ENCODE measurements at regions of chr20 and their contacts with region 1.

Region 1: DNA sequence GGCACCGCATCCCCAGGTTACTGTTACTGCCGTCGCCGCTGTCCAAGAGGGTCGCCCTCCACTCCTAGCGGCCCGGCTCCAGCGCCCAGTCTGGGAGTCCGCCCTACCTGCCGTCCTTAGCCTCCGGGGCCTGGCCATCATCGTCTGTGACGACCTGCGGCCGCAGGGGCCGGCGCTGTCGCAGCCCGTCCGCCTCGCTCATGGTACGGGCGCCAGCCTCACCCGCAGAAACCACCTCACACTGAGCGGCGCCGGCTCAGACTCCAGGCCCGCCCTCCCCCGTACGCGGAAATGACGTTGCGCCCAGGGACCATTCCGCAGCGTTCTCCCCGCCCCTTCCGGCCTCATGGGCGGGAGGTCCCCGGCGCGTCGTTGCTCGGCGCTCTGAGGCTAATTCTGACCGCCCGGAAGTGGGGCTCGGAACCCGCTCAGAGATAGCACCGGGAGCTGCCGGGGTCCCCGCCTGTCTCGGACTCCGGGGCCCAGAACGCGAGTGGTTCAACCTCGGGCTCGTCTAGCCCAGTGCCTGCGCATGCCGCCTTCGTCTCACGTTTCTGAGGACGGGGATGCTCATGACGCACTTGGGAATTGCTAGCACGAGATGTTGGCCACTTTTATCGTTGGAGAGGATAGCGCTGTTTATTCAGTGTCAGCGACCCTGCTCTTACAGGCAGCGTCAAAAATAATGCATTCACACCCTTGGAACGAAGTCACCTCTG is at the start of gene APMAP:
- DNase-seq: peak; percentile 88 to 97 (median 94)
- ATAC-seq: peak; percentile 96
- H3K4me3 ChIP-seq: peak within 1 kb of the TSS; percentile 90
- H3K4me3 Mint-ChIP-seq: peak within 1 kb of the TSS; percentile 88 to 96 (median 94)
- H3K27ac ChIP-seq: peak within 1 kb of the TSS; percentile 97
- H3K27ac Mint-ChIP-seq: peak within 1 kb of the TSS; percentile 93 to 98 (median 97)
- H3K4me1 ChIP-seq: peaks cover 27 to 36% of the 10 kb centered on the region in 2 donors
- H3K4me1 Mint-ChIP-seq: peaks cover 39 to 71% (median 57%) of the 10 kb centered on the region in 7 donors
- H3K27me3 ChIP-seq: no peaks in the 10 kb centered on the region
- H3K27me3 Mint-ChIP-seq: peaks cover 0 to 16% (median 0%) of the 10 kb centered on the region in 5 donors
- total RNA-seq, gene APMAP: 28.2 to 47.3 (median 38.8) TPM

Region 2: DNA sequence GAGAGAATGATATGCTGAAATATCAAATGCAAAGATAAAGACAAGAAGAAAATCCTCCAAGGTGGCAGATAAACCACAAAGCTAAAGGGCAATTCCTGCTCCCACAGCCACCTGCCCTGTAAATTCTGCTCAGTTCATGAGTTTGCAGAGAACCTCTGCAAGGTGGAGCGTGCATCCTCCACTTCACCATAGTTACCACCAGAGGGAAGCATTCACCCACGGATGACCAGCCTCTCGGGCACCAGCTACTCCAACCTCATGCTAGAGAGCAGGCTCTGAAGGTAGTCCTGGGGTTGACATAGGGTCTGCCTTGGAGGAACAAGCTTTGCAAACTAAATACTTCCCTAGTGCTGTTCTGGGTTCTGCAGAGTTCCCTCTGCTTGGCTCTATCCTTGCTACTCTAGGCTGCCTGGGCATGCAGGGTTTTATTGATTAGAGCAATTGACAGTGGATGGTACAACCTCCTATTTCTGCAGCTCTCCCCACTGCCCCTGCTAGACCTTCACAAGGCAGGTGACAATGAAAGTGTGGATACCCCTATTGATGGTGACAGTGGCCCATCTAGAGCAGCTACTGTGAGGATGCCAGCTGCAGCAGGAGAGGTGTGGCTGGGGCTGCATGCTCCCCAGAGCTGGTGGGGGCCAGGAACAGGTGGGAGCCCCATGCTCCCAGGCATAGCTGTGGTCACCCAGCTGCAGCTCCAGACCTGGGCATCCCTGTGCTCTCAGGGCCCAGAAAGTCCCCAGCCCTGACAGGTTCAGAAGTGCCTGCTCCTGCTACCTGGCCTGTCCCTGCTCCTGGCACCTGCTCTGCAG is 1055.1 kb before region 1 on chr20:
- CTCF ChIA-PET with region 1: no interaction called
- POLR2A ChIA-PET with region 1: no interaction called
- intact Hi-C with region 1: loop called (anchors 1 to 10 kb)
- DNase-seq: peak; percentile 43 to 80 (median 70)
- ATAC-seq: peak; percentile 97
- H3K4me3 ChIP-seq: no peak overlapping the region
- H3K4me3 Mint-ChIP-seq: no peak overlapping the region
- H3K27ac ChIP-seq: no peak overlapping the region
- H3K27ac Mint-ChIP-seq: peak overlapping the region in 2 of 9 donors; percentile 25 to 79
- H3K4me1 ChIP-seq: no peaks in the 10 kb centered on the region
- H3K4me1 Mint-ChIP-seq: no peaks in the 10 kb centered on the region
- H3K27me3 ChIP-seq: no peaks in the 10 kb centered on the region
- H3K27me3 Mint-ChIP-seq: peaks cover 0 to 7% (median 0%) of the 10 kb centered on the region in 5 donors

Region 3: GRCh38 chr20:24948939-24949679 is 43.5 kb before region 1 on chr20 and contains the start of gene CST7:
- CTCF ChIA-PET with region 1: no interaction called
- POLR2A ChIA-PET with region 1: interaction called, 4 read pairs
- intact Hi-C with region 1: loop called (anchors 1 kb)
- DNase-seq: peak; percentile 33 to 85 (median 77)
- ATAC-seq: peak; percentile 90
- H3K4me3 ChIP-seq: peak within 1 kb of the TSS; percentile 66
- H3K4me3 Mint-ChIP-seq: peak within 1 kb of the TSS in 9 of 10 donors; percentile 27 to 94 (median 54)
- H3K27ac ChIP-seq: no peak within 1 kb of the TSS
- H3K27ac Mint-ChIP-seq: peak within 1 kb of the TSS; percentile 21 to 94 (median 80)
- H3K4me1 ChIP-seq: peaks cover 6 to 33% of the 10 kb centered on the region in 2 donors
- H3K4me1 Mint-ChIP-seq: peaks cover 12 to 75% (median 25%) of the 10 kb centered on the region in 7 donors
- H3K27me3 ChIP-seq: no peaks in the 10 kb centered on the region
- H3K27me3 Mint-ChIP-seq: no peaks in the 10 kb centered on the region
- total RNA-seq, gene CST7: 1.4 to 74.9 (median 11.5) TPM

Region 4: GRCh38 chr20:25178563-25179438 is 186.2 kb after region 1 on chr20:
- CTCF ChIA-PET with region 1: interaction called, 12 read pairs
- POLR2A ChIA-PET with region 1: interaction called, 4 read pairs
- intact Hi-C with region 1: loop called (anchors 1 kb)
- DNase-seq: peak in 6 of 9 donors; percentile 21 to 52 (median 46)
- ATAC-seq: peak; percentile 82
- H3K4me3 ChIP-seq: no peak overlapping the region
- H3K4me3 Mint-ChIP-seq: no peak overlapping the region
- H3K27ac ChIP-seq: no peak overlapping the region
- H3K27ac Mint-ChIP-seq: peak overlapping the region in 1 of 9 donors; percentile 38
- H3K4me1 ChIP-seq: no peaks in the 10 kb centered on the region
- H3K4me1 Mint-ChIP-seq: no peaks in the 10 kb centered on the region
- H3K27me3 ChIP-seq: no peaks in the 10 kb centered on the region
- H3K27me3 Mint-ChIP-seq: peaks cover 4 to 27% (median 7%) of the 10 kb centered on the region in 5 donors

Region 5: DNA sequence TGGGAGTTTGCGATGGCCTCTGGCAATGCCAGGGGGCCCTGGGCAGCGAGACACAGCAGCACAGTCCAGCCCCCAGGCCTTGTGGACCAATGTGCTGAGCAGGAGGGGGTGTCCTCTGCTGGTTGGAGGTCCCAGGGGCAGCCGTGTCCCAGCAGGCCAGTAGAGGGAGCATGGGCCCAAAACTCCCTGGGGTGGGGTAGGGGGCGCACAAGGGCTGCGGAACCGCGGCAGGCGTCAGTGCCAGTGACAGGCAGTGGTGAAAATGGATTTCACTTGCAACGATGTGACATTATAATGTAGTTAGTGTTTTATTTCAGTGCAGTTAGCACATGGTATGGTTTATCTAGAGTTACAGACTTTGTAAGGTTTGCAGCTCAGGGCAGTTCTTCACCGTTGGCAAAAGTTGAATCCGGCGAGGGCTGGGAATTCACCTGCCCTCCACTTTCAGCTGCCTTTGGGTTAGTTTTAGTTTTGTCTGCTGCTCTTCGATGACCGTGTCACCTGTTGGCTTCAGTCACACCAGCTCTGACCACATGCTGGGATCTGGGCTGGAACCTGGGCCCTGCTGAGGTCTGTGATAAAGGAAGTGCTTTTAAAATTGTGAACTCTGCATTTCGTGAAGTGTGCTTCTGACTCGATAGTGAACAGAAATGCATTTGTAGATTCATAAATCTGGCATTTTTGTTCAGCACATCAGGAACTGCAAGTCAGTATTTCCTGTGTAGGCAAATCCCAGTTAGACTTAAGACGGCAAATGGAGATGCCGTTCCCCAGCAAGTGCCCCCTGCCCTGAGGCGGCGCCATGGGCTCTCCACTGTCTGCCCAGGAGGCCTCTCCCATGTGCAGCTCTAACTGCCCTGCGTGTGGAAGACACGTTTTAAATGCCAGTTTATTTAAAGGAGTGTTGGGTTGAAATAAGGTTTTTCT is 302.1 kb after region 1 on chr20:
- CTCF ChIA-PET with region 1: no interaction called
- POLR2A ChIA-PET with region 1: no interaction called
- intact Hi-C with region 1: loop called (anchors 1 to 2 kb)
- DNase-seq: peak; percentile 43 to 74 (median 59)
- ATAC-seq: peak; percentile 90
- H3K4me3 ChIP-seq: no peak overlapping the region
- H3K4me3 Mint-ChIP-seq: no peak overlapping the region
- H3K27ac ChIP-seq: no peak overlapping the region
- H3K27ac Mint-ChIP-seq: peak overlapping the region in 5 of 9 donors; percentile 29 to 78 (median 57)
- H3K4me1 ChIP-seq: no peaks in the 10 kb centered on the region
- H3K4me1 Mint-ChIP-seq: peaks cover 0 to 12% (median 3%) of the 10 kb centered on the region in 7 donors
- H3K27me3 ChIP-seq: no peaks in the 10 kb centered on the region
- H3K27me3 Mint-ChIP-seq: no peaks in the 10 kb centered on the region

Region 6: DNA sequence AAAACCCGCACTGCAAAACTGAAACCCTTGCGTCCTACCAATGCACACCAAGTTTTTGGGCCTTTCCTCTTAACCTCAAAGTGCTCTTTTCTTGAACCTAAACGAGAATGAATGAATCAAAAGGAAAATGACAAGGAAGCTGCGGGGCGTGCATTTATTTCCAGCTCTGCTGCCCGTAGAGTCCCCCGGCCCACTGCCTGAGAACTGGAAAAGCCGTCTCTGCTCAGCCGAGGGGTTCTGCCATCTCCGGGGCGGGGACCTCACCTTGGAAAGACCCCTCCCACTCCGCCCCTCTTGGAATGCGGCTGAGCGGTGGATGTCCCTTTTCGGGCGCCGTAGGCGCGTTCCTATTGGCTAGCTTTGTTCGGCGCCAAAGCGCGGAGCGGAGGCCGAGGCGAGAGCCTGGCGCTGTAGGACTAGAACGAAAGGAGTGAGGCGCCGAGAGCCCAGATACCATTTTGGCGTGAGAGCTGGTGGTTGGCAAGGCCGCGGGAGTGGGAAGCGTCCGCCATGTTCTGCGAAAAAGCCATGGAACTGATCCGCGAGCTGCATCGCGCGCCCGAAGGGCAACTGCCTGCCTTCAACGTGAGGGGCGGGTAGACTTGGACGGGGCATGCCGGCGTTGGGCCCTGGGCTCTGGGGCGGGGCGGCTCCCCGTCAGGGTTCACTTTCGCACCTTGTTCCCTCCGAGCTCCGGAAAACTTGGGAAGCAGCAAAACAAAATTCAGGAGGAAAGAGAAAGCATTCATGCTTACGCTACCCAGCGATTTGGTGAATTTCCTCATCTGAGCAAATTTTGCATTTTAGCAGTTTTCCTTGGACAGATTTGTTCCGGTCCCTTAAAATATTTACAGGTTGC is 414.9 kb after region 1 on chr20 and contains the start of gene GINS1:
- CTCF ChIA-PET with region 1: no interaction called
- POLR2A ChIA-PET with region 1: no interaction called
- intact Hi-C with region 1: loop called in 1 of 2 experiments (anchors 1 kb)
- DNase-seq: peak; percentile 56 to 92 (median 69)
- ATAC-seq: peak; percentile 94
- H3K4me3 ChIP-seq: peak within 1 kb of the TSS; percentile 75
- H3K4me3 Mint-ChIP-seq: peak within 1 kb of the TSS; percentile 77 to 95 (median 92)
- H3K27ac ChIP-seq: peak within 1 kb of the TSS; percentile 57
- H3K27ac Mint-ChIP-seq: peak within 1 kb of the TSS; percentile 28 to 93 (median 80)
- H3K4me1 ChIP-seq: peaks cover 6 to 11% of the 10 kb centered on the region in 2 donors
- H3K4me1 Mint-ChIP-seq: peaks cover 4 to 25% (median 13%) of the 10 kb centered on the region in 7 donors
- H3K27me3 ChIP-seq: no peaks in the 10 kb centered on the region
- H3K27me3 Mint-ChIP-seq: no peaks in the 10 kb centered on the region
- total RNA-seq, gene GINS1: 0.44 to 24.9 (median 0.81) TPM